Activated CD8-positive, alpha-beta T cell treated with anti-CD3 and anti-CD28 coated beads, Interleukin-2, amount 10 ng/mL, durations not matched to agents 7 days and 5 days (primary cell): ENCODE measurements at regions of chr2 and their contacts with region 1.

Region 1: GRCh38 chr2:230712443-230713330 is at the start of gene CAB39:
- DNase-seq: peak; percentile 89
- ATAC-seq: peak; percentile 89
- H3K4me3 Mint-ChIP-seq: peak within 1 kb of the TSS; percentile 99
- H3K27ac Mint-ChIP-seq: peak within 1 kb of the TSS; percentile 98
- H3K4me1 Mint-ChIP-seq: peaks cover 40% of the 10 kb centered on the region
- H3K27me3 Mint-ChIP-seq: no peaks in the 10 kb centered on the region
- total RNA-seq, gene CAB39: 175 to 178 TPM

Region 2: DNA sequence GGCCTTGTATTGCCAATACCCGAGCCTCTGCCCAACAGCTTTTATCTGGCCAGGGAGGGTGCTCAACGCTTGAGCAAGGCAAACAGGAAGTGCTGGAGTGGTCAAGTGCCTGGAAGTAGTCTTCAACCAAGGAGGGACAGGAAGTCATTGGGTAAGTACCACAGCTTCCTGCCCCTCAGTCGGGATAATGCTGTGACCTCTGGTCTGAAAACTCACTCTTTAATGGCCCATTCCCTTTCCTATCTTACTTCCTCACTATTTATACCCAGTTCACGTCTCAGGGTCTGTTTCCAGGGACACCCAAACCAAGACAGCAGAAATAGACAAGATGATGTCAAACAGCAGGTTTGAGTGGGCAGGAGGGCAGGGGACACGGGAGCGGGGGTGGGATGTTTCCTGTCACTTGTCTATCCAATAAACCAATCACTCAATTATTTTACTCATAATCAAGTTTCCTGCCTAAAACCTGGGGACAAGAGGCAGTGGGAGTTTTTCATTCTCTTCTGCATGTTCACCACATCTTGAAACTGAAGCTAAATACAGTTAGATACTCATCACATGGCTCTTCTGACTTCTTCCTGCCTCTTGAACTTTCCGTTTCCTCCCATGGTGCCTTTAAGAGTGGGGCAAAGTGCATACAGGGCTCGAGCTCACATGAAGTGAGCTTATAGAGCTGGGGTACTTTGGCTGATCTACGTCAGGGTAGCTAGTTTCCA is 69.0 kb before region 1 on chr2:
- CTCF ChIA-PET with region 1: interaction called, 29 read pairs
- POLR2A ChIA-PET with region 1: interaction called, 11 read pairs
- DNase-seq: peak; percentile 70
- ATAC-seq: peak; percentile 96
- H3K4me3 Mint-ChIP-seq: peak overlapping the region; percentile 57
- H3K27ac Mint-ChIP-seq: peak overlapping the region; percentile 97
- H3K4me1 Mint-ChIP-seq: peaks cover 41% of the 10 kb centered on the region
- H3K27me3 Mint-ChIP-seq: no peaks in the 10 kb centered on the region

Region 3: DNA sequence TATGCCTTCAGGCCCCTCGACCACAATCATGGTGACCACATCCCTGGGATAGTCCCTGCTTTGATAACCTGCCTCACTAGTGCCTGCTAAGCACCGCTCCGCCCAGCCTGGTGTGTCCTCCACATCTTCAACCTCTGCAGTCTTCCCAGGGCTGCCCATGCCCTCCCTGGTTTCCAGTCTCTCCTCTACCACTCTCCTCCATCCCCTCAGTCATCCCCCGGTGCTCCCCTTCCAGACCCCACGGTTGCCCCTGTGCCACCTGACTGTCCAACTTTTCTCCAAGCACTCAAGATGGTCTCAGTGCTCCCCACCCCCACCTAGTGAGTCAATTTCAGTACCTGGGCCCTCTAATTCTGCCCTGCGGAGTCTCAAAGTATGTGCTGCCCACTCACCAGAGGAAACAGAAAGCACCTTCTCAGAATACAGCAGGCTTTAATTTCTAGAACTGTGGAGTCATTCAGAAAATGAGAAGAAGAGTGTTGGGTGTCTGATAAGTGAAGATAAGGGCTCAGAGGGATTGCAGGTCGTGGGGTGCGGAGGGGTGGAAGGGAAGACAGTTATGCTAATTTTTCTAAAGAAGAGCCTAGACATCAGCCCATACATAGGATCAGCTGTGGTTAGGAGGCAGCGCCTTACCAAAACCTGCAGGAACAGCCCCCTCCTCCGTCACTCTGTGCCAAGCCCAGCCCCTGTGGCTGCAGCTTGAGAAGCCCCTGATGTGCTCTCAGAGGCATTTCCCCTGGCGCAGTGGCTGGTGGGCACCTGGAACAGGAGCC is 53.6 kb before region 1 on chr2:
- CTCF ChIA-PET with region 1: interaction called, 32 read pairs
- POLR2A ChIA-PET with region 1: interaction called, 108 read pairs
- DNase-seq: peak; percentile 90
- ATAC-seq: peak; percentile 65
- H3K4me3 Mint-ChIP-seq: peak overlapping the region; percentile 86
- H3K27ac Mint-ChIP-seq: peak overlapping the region; percentile 99
- H3K4me1 Mint-ChIP-seq: peaks cover 98% of the 10 kb centered on the region
- H3K27me3 Mint-ChIP-seq: no peaks in the 10 kb centered on the region

Region 4: DNA sequence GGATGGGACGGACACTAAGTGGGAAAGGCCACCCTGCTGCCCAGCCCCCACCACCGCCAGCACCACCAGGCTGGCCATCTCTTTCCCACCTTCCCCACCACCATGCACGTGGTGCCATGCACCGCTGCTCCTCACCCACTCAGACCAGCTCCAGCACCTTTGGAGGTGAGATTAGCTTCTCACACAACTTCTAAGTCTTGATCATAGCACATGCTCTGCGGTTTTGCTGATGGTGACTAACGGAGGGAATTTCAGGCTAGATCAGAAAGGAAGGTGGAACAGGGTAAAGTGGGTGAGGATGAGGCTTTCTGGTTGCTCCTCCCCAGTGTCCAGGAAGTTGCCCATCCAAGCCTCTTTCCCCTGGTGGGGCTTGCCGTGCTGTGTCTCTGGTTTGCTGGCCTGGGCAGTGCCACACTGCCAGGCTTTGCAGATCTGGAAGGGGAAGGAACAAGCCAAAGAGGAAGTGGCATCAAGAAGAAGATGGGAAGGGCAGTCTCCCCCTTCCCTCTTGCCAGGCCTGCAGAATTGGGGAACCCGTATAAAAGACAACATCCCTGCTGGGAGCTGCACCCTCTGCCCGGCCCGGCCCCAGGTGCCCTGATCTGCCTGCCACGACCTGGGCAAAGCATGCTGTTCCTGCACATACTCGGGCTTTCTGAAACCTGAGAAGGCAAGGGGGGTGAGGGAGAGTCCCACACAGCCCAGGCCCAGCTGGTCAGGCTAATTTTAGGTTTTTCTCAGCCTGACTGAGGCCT is 44.3 kb before region 1 on chr2:
- CTCF ChIA-PET with region 1: interaction called, 11 read pairs
- POLR2A ChIA-PET with region 1: interaction called, 19 read pairs
- DNase-seq: no peak
- ATAC-seq: peak; percentile 23
- H3K4me3 Mint-ChIP-seq: peak overlapping the region; percentile 2
- H3K27ac Mint-ChIP-seq: peak overlapping the region; percentile 87
- H3K4me1 Mint-ChIP-seq: peaks cover 82% of the 10 kb centered on the region
- H3K27me3 Mint-ChIP-seq: no peaks in the 10 kb centered on the region

Region 5: DNA sequence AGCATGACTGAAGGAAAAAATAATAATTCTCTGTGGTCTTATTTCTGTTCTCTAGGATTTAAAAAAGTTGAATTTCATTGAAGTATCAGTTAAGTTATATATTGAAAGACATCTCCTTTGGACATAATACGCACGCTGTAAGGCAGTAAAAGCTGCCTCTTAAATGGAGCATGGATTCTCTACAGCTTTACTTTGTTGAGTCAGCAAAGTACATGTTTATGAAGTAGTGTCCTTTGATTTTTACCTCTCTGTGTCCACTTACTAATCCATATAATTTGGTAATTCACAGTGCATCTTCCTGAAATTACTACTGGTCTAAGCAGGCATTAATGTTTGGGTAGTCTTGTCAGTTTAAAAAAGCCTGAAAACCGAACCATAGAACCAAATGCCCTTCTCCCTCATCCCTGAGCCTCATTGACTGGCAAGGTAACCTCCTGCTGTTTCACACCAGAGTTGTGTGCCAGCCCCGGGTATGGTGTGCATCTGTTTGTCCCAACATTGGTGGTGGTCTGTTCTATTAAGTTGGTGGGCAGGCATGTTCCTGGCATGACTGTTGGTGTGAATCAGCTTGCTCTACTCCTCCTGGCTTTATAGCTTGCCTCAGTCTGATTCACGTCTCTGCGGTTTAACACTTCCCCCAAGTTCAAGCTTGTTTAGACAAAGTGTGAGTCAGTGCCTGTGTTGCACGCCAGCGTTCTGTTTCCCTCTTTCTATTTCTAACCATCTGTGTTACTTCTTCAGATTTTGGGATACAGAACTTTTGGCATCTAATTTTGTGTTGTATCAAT is 81.1 kb after region 1 on chr2:
- CTCF ChIA-PET with region 1: interaction called, 53 read pairs
- POLR2A ChIA-PET with region 1: interaction called, 12 read pairs
- DNase-seq: peak; percentile 83
- ATAC-seq: peak; percentile 93
- H3K4me3 Mint-ChIP-seq: peak overlapping the region; percentile 65
- H3K27ac Mint-ChIP-seq: peak overlapping the region; percentile 89
- H3K4me1 Mint-ChIP-seq: peaks cover 49% of the 10 kb centered on the region
- H3K27me3 Mint-ChIP-seq: no peaks in the 10 kb centered on the region